ENCODE measurements at regions of chr4 and their contacts with region 1.

Region 1: GRCh38 chr4:82201805-82202641 is 171.8 kb downstream of the HNRNPD start:
- DNase-seq: peak; percentile 57 to 63
- H3K4me3 ChIP-seq: no peak overlapping the region
- H3K4me3 Mint-ChIP-seq: no peak overlapping the region
- H3K27ac Mint-ChIP-seq: peak overlapping the region; percentile 51
- H3K4me1 ChIP-seq: no peaks in the 10 kb centered on the region
- H3K4me1 Mint-ChIP-seq: no peaks in the 10 kb centered on the region
- H3K27me3 ChIP-seq: no peaks in the 10 kb centered on the region
- H3K27me3 Mint-ChIP-seq: peaks cover 4% of the 10 kb centered on the region
- CTCF ChIP-seq: peak; percentile 57 to 84

Region 2: GRCh38 chr4:81919238-81919637 is 282.8 kb before region 1 on chr4:
- CTCF ChIA-PET with region 1: no interaction called
- POLR2A ChIA-PET with region 1: no interaction called
- intact Hi-C with region 1: loop called (anchors 1 kb)
- DNase-seq: peak; percentile 46 to 49
- H3K4me3 ChIP-seq: no peak overlapping the region
- H3K4me3 Mint-ChIP-seq: no peak overlapping the region
- H3K27ac Mint-ChIP-seq: no peak overlapping the region
- H3K4me1 ChIP-seq: peaks cover 5% of the 10 kb centered on the region; the same call in 1 of the 2 replicates
- H3K4me1 Mint-ChIP-seq: peaks cover 13% of the 10 kb centered on the region
- H3K27me3 ChIP-seq: no peaks in the 10 kb centered on the region
- H3K27me3 Mint-ChIP-seq: no peaks in the 10 kb centered on the region
- CTCF ChIP-seq: peak in 1 of 2 experiments; percentile 63

Region 3: DNA sequence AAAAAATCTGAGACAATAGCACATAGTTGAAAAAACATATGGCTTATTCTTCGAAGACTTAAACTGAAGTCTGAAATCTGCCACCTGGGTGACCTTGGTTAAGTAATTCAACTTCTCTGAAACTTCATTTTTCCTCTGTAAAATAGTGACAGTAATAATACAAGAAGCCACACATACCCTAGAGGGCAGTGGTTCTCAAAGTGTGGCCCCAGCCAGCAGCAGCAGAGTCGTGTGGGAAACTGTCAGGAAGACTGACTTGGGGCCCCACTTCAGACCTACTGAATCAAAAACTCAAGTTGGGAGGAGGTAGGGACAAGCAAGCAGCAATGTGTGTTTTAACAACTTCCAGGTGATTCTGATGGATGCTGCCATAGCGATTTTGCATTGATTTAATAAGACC is 78.1 kb before region 1 on chr4:
- CTCF ChIA-PET with region 1: no interaction called
- POLR2A ChIA-PET with region 1: no interaction called
- intact Hi-C with region 1: loop called (anchors 1 kb)
- DNase-seq: peak in 1 of 2 experiments; percentile 33
- H3K4me3 ChIP-seq: no peak overlapping the region
- H3K4me3 Mint-ChIP-seq: no peak overlapping the region
- H3K27ac Mint-ChIP-seq: no peak overlapping the region
- H3K4me1 ChIP-seq: no peaks in the 10 kb centered on the region
- H3K4me1 Mint-ChIP-seq: peaks cover 10% of the 10 kb centered on the region
- H3K27me3 ChIP-seq: no peaks in the 10 kb centered on the region
- H3K27me3 Mint-ChIP-seq: no peaks in the 10 kb centered on the region
- CTCF ChIP-seq: peak in 1 of 2 experiments; percentile 24

Measured in Caco-2 (cell line).